ENCODE measurements at regions of chr11 and their contacts with region 1.

Region 1: DNA sequence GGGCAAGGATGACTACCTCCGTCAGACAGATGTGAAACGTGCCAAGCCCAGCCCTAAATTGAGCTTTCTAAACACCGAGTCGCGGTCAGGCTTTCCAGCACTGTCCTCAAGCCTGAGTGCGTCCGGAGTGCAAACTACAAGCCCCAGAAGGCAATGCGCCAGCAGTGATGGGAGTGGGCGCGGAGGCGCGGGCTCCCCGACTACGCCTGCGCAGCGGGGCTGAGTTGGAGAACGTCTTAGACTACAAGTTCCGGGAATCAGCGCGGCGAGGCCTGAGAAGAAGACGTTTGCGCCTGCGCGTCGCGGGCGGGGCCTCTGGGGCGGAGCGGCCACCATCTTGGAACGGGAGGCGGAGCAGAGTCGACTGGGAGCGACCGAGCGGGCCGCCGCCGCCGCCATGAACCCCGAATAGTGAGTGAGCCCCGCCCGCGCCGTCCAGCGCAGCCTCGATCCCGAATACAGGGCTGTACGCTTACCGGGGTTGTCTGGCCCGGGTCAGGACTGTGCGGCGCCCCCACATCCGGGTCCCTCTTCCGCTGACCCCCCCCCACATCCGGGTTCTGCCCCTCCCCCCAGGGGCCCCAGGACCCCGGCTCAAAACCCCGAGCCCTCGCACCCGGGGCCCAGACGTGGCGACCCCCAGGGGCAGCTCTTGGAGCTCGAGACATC is at the start of gene RAB1B:
- DNase-seq: peak; percentile 92
- H3K4me3 ChIP-seq: peak within 1 kb of the TSS; percentile 96
- CTCF ChIP-seq: no peak

Region 2: GRCh38 chr11:66288671-66289547 is 20.5 kb after region 1 on chr11 and contains the start of gene YIF1A:
- CTCF ChIA-PET with region 1: interaction called, 144 read pairs
- POLR2A ChIA-PET with region 1: interaction called, 15 read pairs
- DNase-seq: peak; percentile 98
- H3K4me3 ChIP-seq: peak within 1 kb of the TSS; percentile 82
- CTCF ChIP-seq: no peak

Measured in AG04449 (cell line).